ENCODE measurements at regions of chr7 and their contacts with region 1.

Region 1: DNA sequence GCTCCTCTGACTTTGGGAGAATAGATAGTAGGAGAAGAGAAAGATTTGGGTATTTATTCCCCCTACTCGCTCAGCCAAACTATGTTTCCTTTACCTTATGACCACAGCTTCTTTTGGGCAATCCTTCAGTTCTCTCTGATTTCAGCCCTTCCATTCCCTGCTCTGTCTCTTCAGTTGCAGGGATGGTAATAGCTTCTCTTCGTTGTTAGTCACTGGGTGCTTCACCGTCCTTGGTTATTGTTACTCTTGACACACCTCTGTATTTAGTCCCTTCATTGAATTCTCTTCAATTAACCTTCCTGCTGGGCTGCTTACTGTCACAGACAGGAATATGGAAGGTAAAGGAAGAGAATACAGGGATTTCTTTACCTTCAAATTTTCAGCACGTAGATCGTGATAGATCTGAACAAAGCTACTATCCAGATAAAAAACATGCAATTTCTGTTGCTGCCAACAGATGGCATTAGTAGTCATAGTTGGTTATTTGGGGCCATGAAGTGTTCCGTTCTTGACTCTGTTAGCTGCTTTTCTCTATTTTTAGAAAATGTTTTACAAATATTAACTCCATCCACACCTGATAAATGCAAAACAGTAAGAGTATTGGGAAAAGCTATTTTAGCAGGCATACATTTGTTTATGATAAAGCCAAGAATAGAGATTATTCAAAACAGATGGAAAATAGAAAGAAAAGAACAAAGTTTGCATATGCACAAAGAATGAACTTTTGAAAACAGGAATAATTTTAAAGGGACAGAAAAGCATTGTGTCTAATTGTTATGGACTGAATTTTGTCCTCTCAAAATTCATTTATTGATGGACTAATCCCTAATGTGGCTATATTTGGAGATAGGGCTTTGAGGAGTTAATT is 14.0 kb upstream of the PTTG1IP2 start:
- H3K4me3 ChIP-seq: no peak overlapping the region; the same call in none of the 2 replicates
- H3K27ac ChIP-seq: no peak overlapping the region
- H3K4me1 ChIP-seq: no peaks in the 10 kb centered on the region
- CTCF ChIP-seq: no peak

Region 2: GRCh38 chr7:90271753-90272152 is 183.6 kb before region 1 on chr7:
- CTCF ChIA-PET with region 1: no interaction called
- POLR2A ChIA-PET with region 1: no interaction called
- H3K4me3 ChIP-seq: no peak overlapping the region
- H3K27ac ChIP-seq: no peak overlapping the region
- H3K4me1 ChIP-seq: no peaks in the 10 kb centered on the region
- CTCF ChIP-seq: no peak

Region 3: DNA sequence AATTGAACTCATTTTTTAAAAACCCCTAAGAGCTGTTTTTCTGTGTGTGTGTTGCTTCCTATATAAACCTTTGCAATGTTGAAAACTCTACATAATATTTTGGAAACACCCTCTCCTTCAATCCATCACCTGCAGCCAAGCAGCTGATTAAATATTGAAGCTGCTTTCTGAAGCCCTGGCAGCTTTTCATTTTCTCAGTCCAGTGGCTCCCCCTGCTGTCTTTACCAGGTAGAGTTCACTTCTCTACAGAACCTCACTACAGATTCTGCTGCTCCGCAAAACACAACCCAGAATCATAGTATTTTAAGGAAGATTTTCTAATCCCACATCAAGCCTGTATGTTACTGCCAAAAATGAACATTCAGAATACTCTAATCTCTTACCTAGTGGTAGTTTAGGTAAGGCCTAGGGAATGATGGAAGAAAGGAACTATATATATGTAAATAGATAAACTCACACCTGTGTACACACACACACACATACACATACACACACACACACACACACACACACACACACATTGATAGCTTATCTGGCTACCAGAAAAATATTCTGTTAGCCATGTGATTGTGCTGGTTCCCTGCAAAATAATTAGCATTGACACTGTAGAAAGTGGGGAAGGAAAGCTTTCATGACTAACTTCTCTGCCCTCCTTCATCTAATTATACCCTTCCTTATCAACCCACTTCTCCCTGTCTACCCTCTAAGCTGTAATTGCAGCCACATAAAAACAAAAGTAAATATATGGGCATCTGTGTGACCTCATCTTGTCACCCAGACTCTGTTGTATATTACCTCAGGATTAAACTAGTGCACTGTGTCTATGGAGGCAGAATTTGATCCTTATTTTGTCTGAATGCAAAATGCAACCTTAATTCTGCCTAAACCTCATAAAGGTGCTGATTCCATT is 579.3 kb after region 1 on chr7:
- CTCF ChIA-PET with region 1: interaction called, 27 read pairs
- POLR2A ChIA-PET with region 1: no interaction called
- H3K4me3 ChIP-seq: no peak overlapping the region
- H3K27ac ChIP-seq: no peak overlapping the region
- H3K4me1 ChIP-seq: no peaks in the 10 kb centered on the region
- CTCF ChIP-seq: no peak

Measured in HEK293 (cell line).